ENCODE measurements at regions of chr3 and their contacts with region 1.

Region 1: GRCh38 chr3:150216041-150216811 is 191.9 kb upstream of the TSC22D2 start:
- DNase-seq: peak; percentile 50
- H3K4me3 ChIP-seq: no peak overlapping the region
- H3K27ac ChIP-seq: no peak overlapping the region
- H3K4me1 ChIP-seq: no peaks in the 10 kb centered on the region
- H3K27me3 ChIP-seq: no peaks in the 10 kb centered on the region

Region 2: DNA sequence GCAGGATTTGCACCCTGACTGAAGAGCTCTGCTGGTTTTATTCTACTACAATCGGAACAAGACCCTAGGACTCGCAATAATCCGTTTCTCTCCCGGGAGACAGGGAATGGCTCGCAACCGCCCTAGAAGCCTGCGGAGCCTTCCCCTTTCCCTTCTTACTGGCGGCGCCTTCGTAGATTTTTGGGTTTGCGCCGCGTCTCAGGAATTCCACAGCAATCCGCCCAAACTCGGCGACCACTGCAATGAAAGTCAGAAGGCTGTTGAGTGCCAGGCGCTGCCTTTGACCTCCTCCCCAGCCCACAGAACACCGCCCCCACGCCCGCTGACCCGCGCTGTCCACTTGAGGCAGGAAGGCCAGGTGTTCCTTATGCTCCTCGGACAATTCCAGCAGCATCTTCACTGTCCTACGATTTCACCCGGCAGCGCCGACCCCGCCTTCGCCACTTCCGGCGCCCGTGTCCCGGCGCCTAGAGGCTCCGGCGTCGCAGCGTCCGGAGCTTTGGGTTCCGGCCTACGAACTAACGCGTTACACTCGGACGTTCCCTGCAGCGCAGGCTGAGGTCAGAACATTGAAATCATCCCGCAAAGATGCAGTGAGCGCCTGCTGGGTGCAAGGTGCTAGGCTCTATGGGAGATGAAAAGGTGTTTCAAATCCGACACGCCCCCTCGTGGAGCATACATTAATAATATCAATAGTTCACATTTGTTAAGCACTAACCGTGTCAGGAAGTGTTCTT is 464.0 kb before region 1 on chr3 and contains the start of gene COMMD2:
- in situ Hi-C with region 1: loop called (anchors 25 kb)
- DNase-seq: peak; percentile 95
- H3K4me3 ChIP-seq: peak within 1 kb of the TSS; percentile 76
- H3K27ac ChIP-seq: peak within 1 kb of the TSS; percentile 38
- H3K4me1 ChIP-seq: peaks cover 9% of the 10 kb centered on the region
- H3K27me3 ChIP-seq: no peaks in the 10 kb centered on the region
- total RNA-seq, gene COMMD2: 30.1 and 33.8 TPM in 2 replicates

Measured in GM23248 (cell line).